Activated CD8-positive, alpha-beta T cell treated with anti-CD3 and anti-CD28 coated beads, Interleukin-2, amount 10 ng/mL, durations not matched to agents 7 days and 5 days (primary cell): ENCODE measurements at regions of chr16 and their contacts with region 1.

Region 1: GRCh38 chr16:31179747-31180459 is at the start of gene FUS:
- DNase-seq: peak; percentile 92
- ATAC-seq: peak; percentile 56
- H3K4me3 Mint-ChIP-seq: peak within 1 kb of the TSS; percentile 94
- H3K27ac Mint-ChIP-seq: peak within 1 kb of the TSS; percentile 97
- H3K4me1 Mint-ChIP-seq: peaks cover 56% of the 10 kb centered on the region
- H3K27me3 Mint-ChIP-seq: no peaks in the 10 kb centered on the region
- total RNA-seq, gene FUS: 536 to 569 TPM

Region 2: DNA sequence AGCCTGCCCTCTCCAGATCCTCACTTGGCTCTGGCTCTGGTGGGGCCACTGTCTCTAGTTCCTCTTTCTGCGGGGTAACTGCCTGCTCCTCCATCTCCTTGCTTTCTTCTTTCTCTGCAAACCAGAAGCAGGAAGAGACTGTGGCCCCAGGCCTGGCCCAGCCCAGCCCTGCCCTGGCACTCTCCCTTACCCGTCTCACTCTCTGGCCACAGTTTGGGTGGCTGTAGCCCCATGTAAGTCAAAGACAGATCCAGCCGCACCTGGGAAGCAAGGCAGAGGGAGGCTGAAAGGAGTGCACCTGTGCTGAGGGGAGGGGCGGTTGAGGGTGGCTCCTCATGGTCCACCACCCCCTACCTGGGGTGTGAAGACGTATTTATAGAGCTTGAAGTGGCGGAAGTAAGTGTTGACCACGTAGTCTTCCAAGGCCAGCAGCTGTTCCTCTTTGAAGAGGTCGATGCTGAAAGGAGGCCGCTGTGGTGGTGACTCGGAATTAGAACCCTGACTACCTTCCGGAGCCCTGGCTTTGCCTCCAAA is 420.8 kb before region 1 on chr16:
- CTCF ChIA-PET with region 1: no interaction called
- POLR2A ChIA-PET with region 1: no interaction called
- DNase-seq: no peak
- ATAC-seq: no peak
- H3K4me3 Mint-ChIP-seq: no peak overlapping the region
- H3K27ac Mint-ChIP-seq: no peak overlapping the region
- H3K4me1 Mint-ChIP-seq: peaks cover 32% of the 10 kb centered on the region
- H3K27me3 Mint-ChIP-seq: no peaks in the 10 kb centered on the region

Region 3: GRCh38 chr16:31073968-31074813 is 105.7 kb before region 1 on chr16 and contains the starts of genes ZNF646 and ZNF668:
- CTCF ChIA-PET with region 1: no interaction called
- POLR2A ChIA-PET with region 1: interaction called, 19 read pairs
- DNase-seq: peak; percentile 100
- ATAC-seq: peak; percentile 77
- H3K4me3 Mint-ChIP-seq: peak within 1 kb of the TSS; percentile 99
- H3K27ac Mint-ChIP-seq: peak within 1 kb of the TSS; percentile 99
- H3K4me1 Mint-ChIP-seq: peaks cover 48% of the 10 kb centered on the region
- H3K27me3 Mint-ChIP-seq: no peaks in the 10 kb centered on the region
- total RNA-seq, gene ZNF646: 26.0 to 30.3 TPM
- total RNA-seq, gene ZNF668: 20.8 to 22.2 TPM

Region 4: DNA sequence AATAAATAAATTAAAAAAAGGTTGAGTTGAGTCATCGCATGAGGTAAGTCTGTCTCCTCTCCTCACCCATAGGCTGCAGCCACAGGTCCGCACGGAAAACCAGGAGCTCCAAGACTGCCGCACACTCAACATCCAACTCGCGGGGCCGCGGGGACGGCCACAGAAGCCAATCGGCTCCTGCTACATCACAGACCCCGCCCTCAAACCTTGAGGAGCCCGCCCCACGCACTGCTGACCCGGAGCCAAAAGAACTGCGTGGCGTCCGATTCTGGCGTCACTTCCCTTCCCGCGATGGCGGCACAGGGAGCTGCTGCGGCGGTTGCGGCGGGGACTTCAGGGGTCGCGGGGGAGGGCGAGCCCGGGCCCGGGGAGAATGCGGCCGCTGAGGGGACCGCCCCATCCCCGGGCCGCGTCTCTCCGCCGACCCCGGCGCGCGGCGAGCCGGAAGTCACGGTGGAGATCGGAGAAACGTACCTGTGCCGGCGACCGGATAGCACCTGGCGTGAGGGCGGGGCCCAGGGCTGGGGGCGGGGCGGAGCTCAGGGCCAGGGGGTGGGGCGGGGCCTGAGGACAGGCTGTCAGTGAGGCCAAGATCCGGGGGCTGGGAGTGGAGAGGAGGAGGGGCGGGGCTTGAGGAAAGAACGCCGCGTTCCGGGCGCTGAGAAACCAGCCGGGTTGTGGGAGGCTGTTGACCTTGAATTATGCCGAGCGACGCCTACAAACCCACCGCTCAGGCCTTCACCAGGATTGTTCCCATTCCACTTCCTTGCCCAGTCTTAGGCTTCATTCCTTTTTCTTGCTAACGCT is 62.3 kb before region 1 on chr16 and contains the start of gene KAT8:
- CTCF ChIA-PET with region 1: interaction called, 3 read pairs
- POLR2A ChIA-PET with region 1: interaction called, 23 read pairs
- DNase-seq: peak; percentile 99
- ATAC-seq: peak; percentile 95
- H3K4me3 Mint-ChIP-seq: peak within 1 kb of the TSS; percentile 85
- H3K27ac Mint-ChIP-seq: peak within 1 kb of the TSS; percentile 87
- H3K4me1 Mint-ChIP-seq: peaks cover 26% of the 10 kb centered on the region
- H3K27me3 Mint-ChIP-seq: no peaks in the 10 kb centered on the region
- total RNA-seq, gene KAT8: 58.6 to 63.8 TPM

Region 5: GRCh38 chr16:31157136-31157535 is 22.8 kb before region 1 on chr16:
- CTCF ChIA-PET with region 1: interaction called, 14 read pairs
- POLR2A ChIA-PET with region 1: interaction called, 11 read pairs
- DNase-seq: no peak
- ATAC-seq: no peak
- H3K4me3 Mint-ChIP-seq: peak overlapping the region; percentile 1
- H3K27ac Mint-ChIP-seq: no peak overlapping the region
- H3K4me1 Mint-ChIP-seq: peaks cover 12% of the 10 kb centered on the region
- H3K27me3 Mint-ChIP-seq: peaks cover 11% of the 10 kb centered on the region

Region 6: DNA sequence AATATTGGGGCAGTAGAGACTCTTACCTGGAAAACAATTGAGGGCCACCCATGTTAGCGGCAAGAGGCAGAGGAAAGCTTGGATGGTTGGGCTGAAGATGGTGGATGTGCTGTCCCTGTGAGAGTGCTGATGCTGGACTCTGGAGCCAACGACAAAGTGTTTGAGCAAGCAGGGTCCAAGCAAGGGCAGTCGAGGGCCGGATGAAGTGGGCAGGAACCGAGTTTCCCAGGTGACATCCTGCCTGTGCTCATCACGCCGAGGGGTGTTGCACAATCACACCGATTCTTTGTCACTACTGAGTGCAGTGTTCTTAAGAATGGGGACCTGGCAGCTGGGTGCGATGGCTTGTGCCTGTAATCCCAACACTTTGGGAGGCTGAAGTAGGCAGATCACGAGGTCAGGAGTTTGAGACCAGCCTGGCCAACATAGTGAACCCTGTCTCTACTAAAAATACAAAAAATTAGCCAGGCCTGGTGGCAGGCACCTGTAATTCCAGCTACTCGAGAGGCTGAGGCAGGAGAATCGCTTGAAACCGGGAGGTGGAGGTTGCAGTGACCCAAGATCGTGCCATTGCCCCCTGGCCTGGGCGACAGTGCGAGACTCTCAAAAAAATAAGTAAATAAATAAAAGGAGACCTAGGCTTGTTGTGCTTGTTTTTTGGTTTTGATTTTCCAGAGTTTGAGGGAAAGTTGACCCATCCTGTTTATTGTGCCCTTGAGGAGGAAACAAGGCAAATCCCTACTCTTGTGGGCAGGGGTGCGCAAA is 16.6 kb after region 1 on chr16:
- CTCF ChIA-PET with region 1: interaction called, 4 read pairs
- POLR2A ChIA-PET with region 1: interaction called, 87 read pairs
- DNase-seq: no peak
- ATAC-seq: no peak
- H3K4me3 Mint-ChIP-seq: no peak overlapping the region
- H3K27ac Mint-ChIP-seq: peak overlapping the region; percentile 44
- H3K4me1 Mint-ChIP-seq: peaks cover 77% of the 10 kb centered on the region
- H3K27me3 Mint-ChIP-seq: no peaks in the 10 kb centered on the region

Region 7: GRCh38 chr16:31202414-31203375 is 22.8 kb after region 1 on chr16 and contains the start of gene PYCARD:
- CTCF ChIA-PET with region 1: interaction called, 4 read pairs
- POLR2A ChIA-PET with region 1: interaction called, 87 read pairs
- DNase-seq: peak; percentile 58
- ATAC-seq: peak; percentile 37
- H3K4me3 Mint-ChIP-seq: peak within 1 kb of the TSS; percentile 89
- H3K27ac Mint-ChIP-seq: peak within 1 kb of the TSS; percentile 64
- H3K4me1 Mint-ChIP-seq: peaks cover 62% of the 10 kb centered on the region
- H3K27me3 Mint-ChIP-seq: no peaks in the 10 kb centered on the region
- total RNA-seq, gene PYCARD: 97.7 to 99.5 TPM

Region 8: DNA sequence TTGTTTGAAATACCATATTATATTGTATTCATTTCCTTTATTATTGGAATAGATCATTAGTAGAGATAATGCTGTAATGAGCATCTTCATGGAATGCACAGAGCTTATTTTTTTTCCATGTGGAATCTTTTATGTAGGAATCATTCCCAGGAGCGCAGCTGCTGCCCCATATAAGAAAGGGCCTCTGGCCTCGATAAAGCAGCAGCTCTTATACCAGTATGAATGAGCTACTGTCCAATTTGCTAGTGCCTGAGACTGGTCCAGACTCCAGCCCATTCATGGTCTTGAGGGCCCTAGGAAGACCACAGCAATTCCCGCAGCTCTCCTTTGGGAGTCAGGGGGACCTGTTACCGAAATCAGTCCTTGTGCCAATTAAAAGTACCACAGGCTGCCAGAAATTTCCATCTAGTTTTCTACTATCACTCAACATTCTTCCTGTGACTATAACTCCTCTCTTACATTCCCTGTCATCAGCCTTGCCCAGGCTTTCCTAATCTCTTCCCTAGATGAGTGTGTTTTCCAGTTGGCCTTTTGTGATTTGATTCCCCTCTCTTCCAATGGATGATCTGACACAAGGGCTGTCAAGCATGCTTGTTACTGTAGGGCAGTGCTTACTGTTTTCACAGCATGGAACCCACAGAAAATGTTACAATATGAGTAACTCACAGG is 260.7 kb after region 1 on chr16:
- CTCF ChIA-PET with region 1: no interaction called
- POLR2A ChIA-PET with region 1: interaction called, 10 read pairs
- DNase-seq: no peak
- ATAC-seq: no peak
- H3K4me3 Mint-ChIP-seq: no peak overlapping the region
- H3K27ac Mint-ChIP-seq: no peak overlapping the region
- H3K4me1 Mint-ChIP-seq: peaks cover 29% of the 10 kb centered on the region
- H3K27me3 Mint-ChIP-seq: peaks cover 5% of the 10 kb centered on the region